GM23248 (cell line): ENCODE measurements at regions of chr20 and their contacts with region 1.

Region 1: DNA sequence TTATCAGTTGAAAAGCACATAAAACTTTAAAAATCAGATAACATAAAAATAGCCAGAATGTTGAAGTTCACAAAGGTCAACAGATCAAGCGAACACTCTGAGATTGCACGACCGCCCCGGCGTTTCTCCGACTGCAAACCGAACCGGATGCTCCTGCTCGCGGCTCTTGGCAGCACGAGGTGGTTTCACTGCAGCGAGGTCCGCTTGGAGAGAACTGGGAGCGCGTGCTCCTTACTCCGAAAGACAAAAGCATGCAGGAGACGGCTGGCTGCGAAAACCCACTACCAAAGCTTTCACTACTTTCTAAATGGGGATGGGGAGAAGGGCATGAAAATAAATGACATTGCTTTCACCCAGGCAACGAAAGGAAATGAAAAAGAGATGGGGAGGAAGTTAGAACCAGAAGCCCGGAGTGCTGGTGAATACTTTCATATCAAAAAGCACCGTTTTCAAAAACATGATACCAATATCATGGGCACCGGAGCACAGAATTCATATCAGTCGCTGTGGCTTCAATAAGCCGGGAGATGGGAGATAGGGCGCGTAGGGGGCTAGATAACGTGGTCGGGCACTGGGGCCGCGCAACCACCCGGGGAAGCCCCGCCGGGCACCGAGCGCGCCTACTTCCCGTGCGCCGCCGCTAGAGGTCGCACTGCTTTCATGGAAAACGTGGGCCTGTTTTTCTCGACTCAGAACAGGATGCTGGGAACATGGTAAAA is 8.3 kb upstream of the ANKRD60 start:
- DNase-seq: peak; percentile 83
- H3K4me3 ChIP-seq: peak overlapping the region; percentile 73
- H3K27ac ChIP-seq: peak overlapping the region; percentile 73; the same call in 1 of the 2 replicates
- H3K4me1 ChIP-seq: peaks cover 14% of the 10 kb centered on the region
- H3K27me3 ChIP-seq: 0 out of 2 replicates have a peak, but pooled peaks cover 4% of the 10 kb centered on the region

Region 2: GRCh38 chr20:58839474-58839874 is 602.7 kb after region 1 on chr20:
- in situ Hi-C with region 1: loop called (anchors 25 kb)
- DNase-seq: peak; percentile 52
- H3K4me3 ChIP-seq: peak overlapping the region; percentile 48
- H3K27ac ChIP-seq: no peak overlapping the region
- H3K4me1 ChIP-seq: no peaks in the 10 kb centered on the region
- H3K27me3 ChIP-seq: peaks cover 44% of the 10 kb centered on the region

Region 3: GRCh38 chr20:59006864-59007664 is 770.3 kb after region 1 on chr20 and contains the start of gene CTSZ:
- in situ Hi-C with region 1: loop called (anchors 25 kb)
- DNase-seq: peak; percentile 68
- H3K4me3 ChIP-seq: peak within 1 kb of the TSS; percentile 81
- H3K27ac ChIP-seq: peak within 1 kb of the TSS; percentile 37
- H3K4me1 ChIP-seq: peaks cover 25% of the 10 kb centered on the region
- H3K27me3 ChIP-seq: no peaks in the 10 kb centered on the region
- total RNA-seq, gene CTSZ: 391 and 422 TPM in 2 replicates